ENCODE measurements at regions of chr3 and their contacts with region 1.

Region 1: DNA sequence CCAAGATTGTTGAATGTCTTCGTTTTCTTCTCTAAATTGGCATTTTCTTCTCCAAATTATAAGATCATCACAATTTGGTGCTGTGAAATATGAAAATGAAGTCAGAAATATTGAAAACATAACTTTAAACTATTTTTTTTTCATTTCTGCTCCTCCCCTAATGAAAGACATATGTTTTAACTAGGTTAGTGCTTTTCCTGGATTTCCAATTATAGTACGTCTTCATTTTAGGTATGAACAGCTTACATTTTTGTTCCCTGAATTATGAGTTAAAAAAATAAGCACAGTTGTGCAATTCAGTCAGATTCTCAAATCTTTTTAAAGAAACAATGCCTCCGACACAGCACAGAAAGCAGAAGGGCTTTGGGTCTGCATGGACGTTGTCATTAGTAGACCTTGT is 83.5 kb upstream of the CFAP20DC start:
- DNase-seq: no peak
- H3K4me3 ChIP-seq: no peak overlapping the region
- H3K27ac ChIP-seq: no peak overlapping the region
- H3K4me1 ChIP-seq: peaks cover 8 to 9% of the 10 kb centered on the region in 2 donors
- H3K27me3 ChIP-seq: no peaks in the 10 kb centered on the region
- CTCF ChIP-seq: no peak
- POLR2A ChIP-seq: no peak

Region 2: GRCh38 chr3:60036803-60037202 is 903.5 kb after region 1 on chr3:
- intact Hi-C with region 1: loop called in 1 of 2 experiments (anchors 10 kb)
- DNase-seq: no peak
- H3K4me3 ChIP-seq: no peak overlapping the region
- H3K27ac ChIP-seq: no peak overlapping the region
- H3K4me1 ChIP-seq: no peaks in the 10 kb centered on the region
- H3K27me3 ChIP-seq: no peaks in the 10 kb centered on the region
- CTCF ChIP-seq: no peak
- POLR2A ChIP-seq: no peak